Activated CD4-positive, alpha-beta T cell treated with anti-CD3 and anti-CD28 coated beads, Interleukin-2, amount 10 ng/mL, durations not matched to agents 7 days and 5 days (primary cell): ENCODE measurements at regions of chr3 and their contacts with region 1.

Region 1: DNA sequence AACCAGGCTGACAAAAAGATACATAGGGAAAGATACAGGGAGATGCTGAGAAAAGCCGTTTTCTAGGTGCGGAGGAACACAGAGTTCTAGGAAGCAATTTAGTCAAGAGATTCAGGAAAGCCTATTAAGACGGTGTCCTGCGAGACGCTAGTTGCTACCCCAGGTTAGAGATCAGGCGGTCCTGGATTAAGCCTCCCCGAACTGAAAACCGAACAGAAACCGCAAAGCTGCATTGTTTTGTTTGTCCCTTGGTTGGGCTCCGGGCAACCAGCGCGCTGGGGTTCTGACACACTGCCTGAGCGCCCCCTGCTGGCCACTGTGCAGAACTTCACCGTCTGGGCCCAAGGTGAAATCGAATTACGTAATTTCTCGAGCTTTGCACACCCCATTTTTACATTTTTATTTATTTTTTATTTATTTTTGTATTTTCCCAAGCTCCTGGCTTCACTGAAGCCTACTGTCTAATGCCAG is 37.3 kb upstream of the NDUFB4 start:
- DNase-seq: peak; percentile 93
- H3K4me3 Mint-ChIP-seq: peak overlapping the region; percentile 73
- H3K27ac Mint-ChIP-seq: peak overlapping the region; percentile 58
- H3K4me1 Mint-ChIP-seq: peaks cover 14% of the 10 kb centered on the region
- H3K27me3 Mint-ChIP-seq: peaks cover 6% of the 10 kb centered on the region

Region 2: DNA sequence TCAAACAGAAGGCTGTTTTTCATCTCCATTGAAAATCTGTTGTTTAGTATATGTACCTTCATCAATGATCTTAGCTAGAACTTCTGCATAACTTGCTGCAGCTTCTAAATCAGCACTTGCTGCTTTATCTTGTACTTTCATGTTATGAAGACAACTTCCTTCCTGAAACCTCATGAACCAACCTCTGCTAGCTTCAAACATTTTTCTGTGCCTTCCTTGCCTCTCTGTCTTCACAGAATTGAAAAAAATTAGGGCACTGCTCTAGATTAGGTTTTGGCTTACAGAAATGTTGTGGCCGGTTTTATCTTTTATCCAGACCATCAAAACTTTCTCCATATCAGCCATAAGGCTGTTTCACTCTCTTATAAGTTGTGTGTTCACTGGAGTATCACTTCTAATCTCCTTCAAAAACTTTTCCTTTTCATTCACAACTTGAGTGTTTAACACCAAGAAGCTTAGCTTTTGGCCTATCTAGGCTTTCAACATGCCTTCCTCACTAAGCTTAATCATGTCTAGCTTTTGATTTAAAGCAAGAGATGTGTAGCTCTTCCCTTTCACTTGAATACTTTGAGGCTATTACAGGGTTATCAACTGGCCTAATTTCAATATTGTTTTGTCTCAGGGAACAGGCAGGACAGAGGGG is 1602.8 kb before region 1 on chr3:
- CTCF ChIA-PET with region 1: no interaction called
- POLR2A ChIA-PET with region 1: interaction called, 10 read pairs
- DNase-seq: peak; percentile 33
- H3K4me3 Mint-ChIP-seq: peak overlapping the region; percentile 28
- H3K27ac Mint-ChIP-seq: peak overlapping the region; percentile 91
- H3K4me1 Mint-ChIP-seq: peaks cover 42% of the 10 kb centered on the region
- H3K27me3 Mint-ChIP-seq: no peaks in the 10 kb centered on the region

Region 3: DNA sequence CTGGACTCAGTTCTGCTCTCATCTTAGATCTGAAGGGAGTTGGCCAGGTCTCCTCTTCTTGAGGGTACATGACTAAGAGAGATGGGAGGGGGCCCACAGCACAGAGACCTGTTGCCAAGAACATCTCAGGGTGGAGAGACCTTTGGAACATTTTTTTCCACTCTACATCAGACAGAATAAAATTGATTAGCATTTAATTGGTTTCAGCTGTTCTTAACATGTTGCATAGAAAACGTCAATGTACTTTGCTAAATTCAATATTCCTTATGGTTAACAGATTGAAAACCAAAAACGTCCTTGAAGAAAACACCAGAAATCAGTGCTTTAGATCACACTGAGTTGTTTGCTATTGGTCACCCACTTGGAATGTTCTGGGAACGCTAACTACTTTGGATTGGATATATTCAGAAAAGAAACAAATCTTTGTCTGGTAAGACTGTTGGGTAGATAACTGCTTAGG is 71.6 kb before region 1 on chr3:
- CTCF ChIA-PET with region 1: no interaction called
- POLR2A ChIA-PET with region 1: no interaction called
- DNase-seq: no peak
- H3K4me3 Mint-ChIP-seq: no peak overlapping the region
- H3K27ac Mint-ChIP-seq: no peak overlapping the region
- H3K4me1 Mint-ChIP-seq: no peaks in the 10 kb centered on the region
- H3K27me3 Mint-ChIP-seq: peaks cover 14% of the 10 kb centered on the region

Region 4: DNA sequence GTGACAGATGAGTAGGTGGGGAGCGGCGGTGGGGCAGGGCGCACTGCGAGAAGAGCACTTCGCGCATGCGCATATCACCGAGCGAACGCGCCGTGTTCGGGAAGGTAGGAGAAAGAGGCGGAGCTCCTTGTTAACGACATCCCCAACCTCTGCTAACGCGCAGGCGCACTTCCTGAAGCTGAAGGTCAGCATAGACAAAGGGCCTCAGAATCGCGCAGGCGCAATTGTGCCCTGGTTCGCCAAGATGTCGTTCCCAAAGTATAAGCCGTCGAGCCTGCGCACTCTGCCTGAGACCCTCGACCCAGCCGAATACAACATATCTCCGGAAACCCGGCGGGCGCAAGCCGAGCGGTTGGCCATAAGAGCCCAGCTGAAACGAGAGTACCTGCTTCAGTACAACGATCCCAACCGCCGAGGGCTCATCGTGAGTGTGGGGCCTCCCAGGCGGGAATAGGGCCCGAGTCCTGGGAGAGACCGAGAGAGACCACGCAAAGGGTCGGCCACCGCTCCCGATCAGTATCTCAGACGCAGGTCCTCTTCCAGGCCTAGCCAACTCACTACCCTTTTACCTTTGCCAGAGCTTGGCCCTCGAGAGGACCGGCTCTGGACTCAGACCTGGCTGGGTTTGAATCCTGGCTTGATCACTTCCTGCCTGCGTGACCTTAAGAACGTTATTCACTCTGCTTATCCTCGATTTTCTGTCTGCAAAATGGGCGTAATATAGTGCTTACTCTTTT is 37.5 kb after region 1 on chr3 and contains the start of gene NDUFB4:
- CTCF ChIA-PET with region 1: interaction called, 10 read pairs
- POLR2A ChIA-PET with region 1: interaction called, 4 read pairs
- DNase-seq: peak; percentile 96
- H3K4me3 Mint-ChIP-seq: peak within 1 kb of the TSS; percentile 87
- H3K27ac Mint-ChIP-seq: peak within 1 kb of the TSS; percentile 95
- H3K4me1 Mint-ChIP-seq: peaks cover 11% of the 10 kb centered on the region
- H3K27me3 Mint-ChIP-seq: peaks cover 5% of the 10 kb centered on the region
- total RNA-seq, gene NDUFB4: 117 to 148 TPM

Region 5: DNA sequence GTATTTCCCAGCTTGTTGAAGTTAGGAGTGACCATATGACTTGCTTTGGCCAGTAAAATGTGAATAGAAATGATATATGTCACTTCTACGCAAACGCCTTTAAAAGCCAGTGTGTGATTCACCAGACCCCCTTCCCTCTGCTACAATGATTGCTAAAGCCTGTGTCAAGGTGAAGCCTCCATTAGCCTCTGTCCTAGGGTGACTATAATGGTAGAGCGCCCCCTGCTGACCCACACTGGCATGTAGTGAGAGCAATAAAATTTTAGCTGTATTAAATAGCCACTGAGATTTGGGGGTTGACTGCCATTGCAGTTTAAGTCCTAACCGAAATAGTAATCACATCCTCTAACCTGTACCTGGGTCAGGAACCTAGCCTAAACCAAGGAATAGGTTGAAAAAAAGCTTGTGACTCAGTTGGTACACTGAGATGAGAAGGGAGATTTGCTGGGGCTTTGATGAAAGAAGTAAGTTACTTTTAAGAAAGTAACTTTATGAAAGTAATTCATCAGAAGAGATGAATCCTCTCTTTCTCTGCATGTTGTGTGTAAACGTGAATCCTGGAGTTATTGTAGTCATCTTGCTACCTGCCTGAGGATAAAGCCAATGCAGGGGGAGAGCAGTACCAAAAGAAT is 236.3 kb after region 1 on chr3:
- CTCF ChIA-PET with region 1: interaction called, 15 read pairs
- POLR2A ChIA-PET with region 1: no interaction called
- DNase-seq: peak; percentile 87
- H3K4me3 Mint-ChIP-seq: no peak overlapping the region
- H3K27ac Mint-ChIP-seq: no peak overlapping the region
- H3K4me1 Mint-ChIP-seq: no peaks in the 10 kb centered on the region
- H3K27me3 Mint-ChIP-seq: peaks cover 6% of the 10 kb centered on the region